Prostate gland (tissue), 2 donors: ENCODE measurements at regions of chr2 and their contacts with region 1.

Region 1: GRCh38 chr2:175366815-175367214 is 185.3 kb upstream of the ATP5MC3 start:
- DNase-seq: peak; percentile 26
- H3K4me3 ChIP-seq: no peak overlapping the region
- H3K27ac ChIP-seq: no peak overlapping the region
- H3K4me1 ChIP-seq: no peaks in the 10 kb centered on the region
- H3K27me3 ChIP-seq: no peaks in the 10 kb centered on the region
- CTCF ChIP-seq: peak in 3 of 4 experiments; percentile 49 to 74 (median 65)
- POLR2A ChIP-seq: no peak

Region 2: GRCh38 chr2:174985630-174986029 is 381.2 kb before region 1 on chr2:
- intact Hi-C with region 1: no loop called
- DNase-seq: no peak
- H3K4me3 ChIP-seq: no peak overlapping the region
- H3K27ac ChIP-seq: no peak overlapping the region
- H3K4me1 ChIP-seq: no peaks in the 10 kb centered on the region
- H3K27me3 ChIP-seq: no peaks in the 10 kb centered on the region
- CTCF ChIP-seq: peak in 3 of 4 experiments; percentile 45 to 61 (median 52)
- POLR2A ChIP-seq: no peak

Region 3: DNA sequence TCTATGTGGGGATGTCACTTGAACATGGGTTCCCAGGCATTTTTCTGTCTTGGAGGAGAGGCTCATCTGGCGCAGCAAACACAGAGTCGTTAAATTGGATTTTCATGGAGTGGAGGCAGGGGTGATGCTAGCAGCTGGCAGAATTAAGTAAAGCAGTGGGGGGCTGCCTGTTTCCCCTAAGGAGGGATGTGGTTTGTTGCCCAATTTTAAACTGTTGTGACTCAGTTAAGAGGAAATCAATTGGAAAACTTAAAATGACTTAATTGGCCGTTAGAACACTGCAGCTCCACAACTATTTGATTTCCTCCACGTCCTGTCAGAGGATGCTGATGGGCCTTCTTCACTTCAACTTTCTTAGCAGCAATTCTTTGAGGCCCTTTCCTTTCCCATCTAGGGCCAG is 168.8 kb after region 1 on chr2:
- intact Hi-C with region 1: no loop called
- DNase-seq: no peak
- H3K4me3 ChIP-seq: no peak overlapping the region
- H3K27ac ChIP-seq: no peak overlapping the region
- H3K4me1 ChIP-seq: no peaks in the 10 kb centered on the region
- H3K27me3 ChIP-seq: no peaks in the 10 kb centered on the region
- CTCF ChIP-seq: no peak
- POLR2A ChIP-seq: no peak

Region 4: DNA sequence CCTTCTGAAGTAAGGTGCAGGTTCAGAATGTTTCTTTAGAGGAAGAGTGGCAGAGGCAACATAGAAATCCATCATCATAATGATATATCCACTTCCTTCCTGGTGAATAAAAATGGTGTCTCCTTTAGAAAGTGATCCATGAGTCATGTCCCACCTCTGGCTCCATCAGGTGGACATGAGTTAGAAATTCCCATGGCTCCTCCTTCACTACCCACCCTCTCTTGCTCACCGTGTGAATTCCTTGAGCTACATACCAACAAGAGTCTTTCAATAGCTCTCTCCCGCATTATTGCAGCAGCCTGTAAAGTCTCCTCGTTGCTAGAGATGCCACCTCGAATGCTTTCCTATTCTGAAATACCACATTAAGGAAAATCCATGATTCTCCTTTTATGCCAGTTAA is 317.6 kb after region 1 on chr2:
- intact Hi-C with region 1: loop called (anchors 10 kb)
- DNase-seq: no peak
- H3K4me3 ChIP-seq: no peak overlapping the region
- H3K27ac ChIP-seq: no peak overlapping the region
- H3K4me1 ChIP-seq: no peaks in the 10 kb centered on the region
- H3K27me3 ChIP-seq: no peaks in the 10 kb centered on the region
- CTCF ChIP-seq: no peak
- POLR2A ChIP-seq: no peak